Activated CD4-positive, alpha-beta T cell treated with anti-CD3 and anti-CD28 coated beads, Interleukin-2, amount 10 ng/mL, durations not matched to agents 24 days and 14 days (primary cell): ENCODE measurements at regions of chr11 and their contacts with region 1.

Region 1: DNA sequence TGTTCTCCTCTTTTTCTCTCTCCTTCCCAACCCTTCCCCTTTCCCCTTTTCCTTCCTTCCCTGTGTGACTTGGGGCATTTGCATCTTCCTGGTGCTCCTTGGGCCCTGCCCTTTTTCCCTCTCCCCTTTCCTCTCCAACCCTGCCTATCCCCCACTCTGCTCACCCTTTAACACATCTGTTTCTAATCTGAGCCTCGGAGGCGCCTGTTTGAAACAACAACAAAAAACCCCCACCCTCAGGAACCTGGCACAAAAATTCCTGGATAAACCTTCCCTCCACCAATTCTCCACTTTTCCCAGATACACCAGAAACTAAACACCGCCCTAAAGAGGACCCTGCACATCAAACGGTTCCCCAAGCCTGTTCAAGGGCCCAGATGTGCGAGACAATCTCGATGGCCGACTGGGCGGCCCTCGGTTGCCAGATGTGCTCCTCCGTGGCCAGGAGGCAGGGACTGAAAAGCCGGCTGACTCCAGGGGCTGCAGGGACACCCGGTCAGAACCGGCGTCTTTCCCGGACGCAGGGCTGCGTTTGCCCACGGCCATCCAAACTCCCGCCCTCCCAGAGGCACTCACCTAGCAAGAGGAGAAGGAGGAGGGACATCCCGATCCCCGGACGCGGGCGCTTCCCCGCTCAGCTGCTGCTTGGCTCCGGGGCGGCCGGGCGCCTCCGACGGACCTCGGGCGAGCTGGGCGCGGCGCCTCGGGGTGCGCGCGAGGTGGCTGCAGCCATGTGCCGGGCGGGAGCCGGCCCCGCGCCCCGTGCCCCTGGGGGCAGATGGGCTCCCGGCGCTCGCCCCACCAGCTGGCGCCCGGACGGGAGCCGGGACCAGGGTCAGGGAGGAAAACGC is 486 bp downstream of the CLMP start:
- DNase-seq: no peak
- H3K4me3 Mint-ChIP-seq: peak overlapping the region; percentile 56
- H3K27ac Mint-ChIP-seq: no peak overlapping the region
- H3K4me1 Mint-ChIP-seq: peaks cover 12% of the 10 kb centered on the region
- H3K27me3 Mint-ChIP-seq: peaks cover 79% of the 10 kb centered on the region

Region 2: DNA sequence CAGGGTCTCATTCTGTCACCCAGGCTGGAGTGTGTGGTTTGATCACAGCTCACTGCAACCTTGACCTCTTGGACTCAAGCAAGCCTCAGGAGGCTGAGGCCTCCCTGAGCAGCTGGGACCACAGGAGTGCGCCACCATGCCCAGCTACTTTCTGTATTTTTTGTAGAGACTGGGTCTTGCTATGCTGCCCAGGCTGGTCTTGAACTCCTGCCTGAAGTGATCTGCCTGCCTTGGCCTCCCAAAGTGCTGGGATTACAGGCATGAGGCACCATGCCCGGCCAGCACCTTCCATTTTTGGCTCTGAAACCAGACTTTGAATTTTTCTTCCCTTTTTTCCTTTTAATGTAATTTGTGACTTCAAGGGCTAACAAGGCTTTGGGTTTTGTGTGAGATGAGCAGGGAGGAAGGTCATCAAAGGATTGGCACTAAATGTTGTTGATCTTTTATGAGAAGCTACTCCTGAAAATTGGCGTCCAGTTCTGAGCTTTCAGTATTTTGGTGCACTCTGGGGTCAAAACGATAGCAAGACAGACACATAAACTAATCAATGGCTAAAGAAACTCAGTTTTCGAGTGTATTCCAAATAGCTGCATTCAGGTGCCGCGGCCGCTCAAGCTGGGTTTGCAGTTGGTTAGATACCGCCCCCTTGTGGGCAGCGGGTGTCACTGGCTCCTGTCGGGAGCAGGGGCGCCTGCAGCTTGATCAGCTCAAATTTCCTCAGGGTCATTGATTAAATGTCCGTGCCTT is 52.4 kb after region 1 on chr11:
- intact Hi-C with region 1: loop called (anchors 5 kb)
- DNase-seq: peak; percentile 94
- H3K4me3 Mint-ChIP-seq: no peak overlapping the region
- H3K27ac Mint-ChIP-seq: no peak overlapping the region
- H3K4me1 Mint-ChIP-seq: peaks cover 8% of the 10 kb centered on the region
- H3K27me3 Mint-ChIP-seq: peaks cover 31% of the 10 kb centered on the region